ENCODE measurements at regions of chr9 and their contacts with region 1.

Region 1: DNA sequence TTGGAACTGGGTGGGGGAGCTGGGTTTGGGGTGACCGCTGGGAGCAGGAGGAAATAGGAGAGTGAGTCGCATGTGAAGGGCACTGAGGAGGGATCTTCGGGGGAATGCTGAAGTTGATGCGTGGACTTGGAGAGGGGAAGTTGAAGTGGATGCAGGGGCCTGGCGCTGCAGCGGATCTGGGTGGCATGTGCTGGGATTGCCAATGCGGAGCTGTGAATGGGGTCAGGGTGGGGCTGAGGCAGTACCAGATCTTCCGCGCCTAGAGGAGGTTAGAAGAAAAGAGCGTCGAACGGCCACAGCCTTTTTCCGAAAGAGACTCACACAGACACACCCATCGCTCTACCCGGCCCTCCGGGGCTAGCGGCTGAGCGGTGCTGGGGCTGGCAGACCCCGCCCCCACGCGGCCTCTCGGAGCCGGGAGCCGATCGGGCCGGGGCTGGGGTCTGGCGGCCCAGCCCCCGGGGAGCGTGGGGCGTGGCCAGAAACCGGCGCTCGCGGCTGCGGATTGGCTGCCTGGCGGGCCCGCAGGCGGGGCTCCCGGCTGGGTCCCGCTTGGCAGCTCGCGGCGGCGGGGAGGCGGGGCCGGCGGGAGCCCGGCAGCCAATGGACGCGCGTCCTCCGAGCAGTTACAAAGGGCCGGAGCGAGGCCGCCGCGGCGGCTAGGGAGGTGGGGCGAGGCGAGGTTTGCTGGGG is at the start of gene TGFBR1:
- DNase-seq: peak; percentile 81 to 96 (median 89)
- ATAC-seq: peak; percentile 81
- H3K4me3 ChIP-seq: peak within 1 kb of the TSS; percentile 68 to 85
- H3K4me3 Mint-ChIP-seq: peak within 1 kb of the TSS; percentile 90
- H3K27ac ChIP-seq: peak within 1 kb of the TSS; percentile 57 to 70
- H3K27ac Mint-ChIP-seq: peak within 1 kb of the TSS; percentile 91
- H3K4me1 ChIP-seq: peaks cover 48% of the 10 kb centered on the region
- H3K4me1 Mint-ChIP-seq: peaks cover 64% of the 10 kb centered on the region
- H3K27me3 ChIP-seq: no peaks in the 10 kb centered on the region
- H3K27me3 Mint-ChIP-seq: no peaks in the 10 kb centered on the region
- CTCF ChIP-seq: no peak
- total RNA-seq, gene TGFBR1: 24.2 to 25.8 TPM

Region 2: DNA sequence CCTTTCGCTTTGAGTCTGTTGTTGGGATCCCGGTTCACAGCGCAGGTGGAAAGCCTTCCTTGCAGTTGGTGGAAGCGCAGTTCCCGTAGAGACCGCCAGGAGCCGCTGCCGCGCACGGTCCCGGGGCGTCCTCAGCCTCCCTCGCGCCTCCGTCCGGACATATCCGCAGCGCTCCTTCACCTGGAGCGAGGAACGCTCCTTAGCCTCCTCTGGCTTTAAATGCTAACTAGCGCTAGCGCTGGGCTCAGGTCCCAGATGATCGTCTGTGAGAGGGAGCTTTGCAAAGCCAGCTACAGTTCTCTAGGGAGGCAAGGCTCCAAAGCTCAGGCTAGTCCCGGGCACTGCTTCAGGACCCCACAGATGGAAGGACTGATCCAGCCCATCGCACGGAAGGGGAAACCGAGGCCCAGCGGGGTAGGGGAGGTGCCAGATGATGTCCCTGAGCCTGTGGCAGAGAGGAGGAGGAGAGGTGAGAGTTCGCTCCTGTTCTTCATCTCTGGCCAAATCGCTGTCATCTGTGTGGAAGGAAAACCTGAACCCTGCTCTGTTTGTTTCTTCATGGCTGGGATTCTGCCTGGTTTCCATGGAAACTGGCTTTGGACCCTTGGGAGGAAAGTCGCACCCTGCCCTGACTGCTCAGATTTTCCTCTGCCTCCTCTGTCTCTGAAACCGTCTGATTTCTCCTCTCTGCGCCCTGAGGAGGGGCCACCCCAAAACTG is 129.5 kb before region 1 on chr9:
- CTCF ChIA-PET with region 1: interaction called, 12 read pairs
- POLR2A ChIA-PET with region 1: no interaction called
- intact Hi-C with region 1: no loop called
- DNase-seq: peak; percentile 66 to 88 (median 81)
- ATAC-seq: peak; percentile 99
- H3K4me3 ChIP-seq: peak overlapping the region; percentile 33
- H3K4me3 Mint-ChIP-seq: peak overlapping the region; percentile 67
- H3K27ac ChIP-seq: no peak overlapping the region
- H3K27ac Mint-ChIP-seq: no peak overlapping the region
- H3K4me1 ChIP-seq: peaks cover 18% of the 10 kb centered on the region
- H3K4me1 Mint-ChIP-seq: peaks cover 6% of the 10 kb centered on the region
- H3K27me3 ChIP-seq: peaks cover 0 to 7% of the 10 kb centered on the region in 2 experiments
- H3K27me3 Mint-ChIP-seq: peaks cover 7% of the 10 kb centered on the region
- CTCF ChIP-seq: peak; percentile 97

Region 3: DNA sequence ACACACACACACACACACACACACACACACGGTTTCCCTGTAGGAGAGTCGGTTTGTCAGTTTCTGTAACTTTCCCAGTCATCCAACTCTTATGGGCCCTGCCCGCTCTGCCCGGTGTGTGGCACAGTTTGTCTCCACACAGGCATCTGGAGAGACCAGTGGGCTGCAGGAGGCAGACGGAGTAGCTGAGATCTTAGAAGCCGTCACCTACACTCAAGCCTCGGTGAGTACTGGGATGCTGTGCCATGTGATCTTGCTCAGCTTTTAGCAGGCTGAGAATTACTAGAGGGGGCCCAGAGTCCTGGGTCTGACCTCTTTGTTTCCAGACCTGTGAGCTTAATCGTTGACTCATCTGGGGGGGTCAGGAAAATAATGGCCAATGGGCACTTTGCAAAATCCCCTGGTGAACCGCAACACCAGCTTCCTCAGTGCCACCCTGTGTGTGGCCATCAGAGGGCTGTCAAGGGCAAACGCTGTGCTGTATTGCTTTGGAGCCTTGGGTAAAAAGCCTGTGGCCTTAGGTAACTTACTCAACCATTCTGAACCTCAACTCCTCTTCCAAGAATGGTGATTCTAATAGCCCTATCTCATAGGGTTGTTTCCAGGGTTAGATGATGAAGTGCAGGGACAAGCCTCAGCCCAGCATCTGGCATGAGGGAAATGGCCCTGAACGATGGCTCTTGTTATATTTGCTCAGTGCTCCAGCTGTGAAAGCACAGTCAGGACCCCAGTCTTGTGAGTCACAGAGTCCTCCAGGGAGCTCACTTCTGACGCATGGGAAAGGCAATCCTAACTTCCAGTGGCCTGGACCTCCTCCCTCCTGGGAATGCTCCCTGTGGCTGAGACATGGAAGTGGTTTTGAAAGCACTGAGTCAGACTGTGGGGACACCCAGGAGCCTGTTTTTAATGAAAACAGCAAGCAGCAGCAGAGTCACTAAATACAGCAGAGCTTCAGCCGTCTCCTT is 115.3 kb before region 1 on chr9:
- CTCF ChIA-PET with region 1: no interaction called
- POLR2A ChIA-PET with region 1: no interaction called
- intact Hi-C with region 1: no loop called
- DNase-seq: no peak
- ATAC-seq: no peak
- H3K4me3 ChIP-seq: no peak overlapping the region
- H3K4me3 Mint-ChIP-seq: no peak overlapping the region
- H3K27ac ChIP-seq: no peak overlapping the region
- H3K27ac Mint-ChIP-seq: no peak overlapping the region
- H3K4me1 ChIP-seq: no peaks in the 10 kb centered on the region
- H3K4me1 Mint-ChIP-seq: no peaks in the 10 kb centered on the region
- H3K27me3 ChIP-seq: no peaks in the 10 kb centered on the region
- H3K27me3 Mint-ChIP-seq: no peaks in the 10 kb centered on the region
- CTCF ChIP-seq: no peak

Region 4: DNA sequence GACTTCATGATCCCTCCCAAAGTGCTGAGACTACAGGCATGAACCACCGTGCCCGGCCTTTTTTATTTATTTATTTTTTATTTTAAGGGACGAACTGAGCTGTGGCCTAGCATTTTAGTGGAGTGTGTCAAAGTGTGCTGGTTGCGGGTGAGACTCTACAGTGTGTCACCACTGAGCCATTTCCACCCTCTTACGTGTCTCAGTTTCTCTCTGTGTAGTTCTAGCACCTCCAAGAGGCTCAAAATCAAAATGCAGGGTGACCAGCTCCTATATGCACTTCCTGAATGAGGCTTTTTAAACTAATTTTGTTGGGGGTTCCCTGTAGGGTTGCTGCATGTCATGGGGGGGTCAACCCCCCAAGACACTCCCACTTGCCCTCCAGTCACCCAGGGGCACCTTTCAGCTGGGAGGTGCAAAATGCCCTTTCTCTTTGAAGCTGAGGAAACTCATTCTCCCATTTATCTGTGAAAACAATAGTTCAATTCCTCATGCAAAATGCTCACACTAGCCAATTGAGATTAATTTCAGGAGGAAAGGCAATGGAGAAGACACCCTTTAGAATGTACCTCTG is 91.6 kb before region 1 on chr9:
- CTCF ChIA-PET with region 1: interaction called, 11 read pairs
- POLR2A ChIA-PET with region 1: interaction called, 8 read pairs
- intact Hi-C with region 1: no loop called
- DNase-seq: peak in 4 of 9 experiments; percentile 25 to 68 (median 52)
- ATAC-seq: peak; percentile 73
- H3K4me3 ChIP-seq: peak overlapping the region in 1 of 2 experiments; percentile 24
- H3K4me3 Mint-ChIP-seq: peak overlapping the region; percentile 74
- H3K27ac ChIP-seq: peak overlapping the region; percentile 35 to 81
- H3K27ac Mint-ChIP-seq: peak overlapping the region; percentile 95
- H3K4me1 ChIP-seq: peaks cover 20% of the 10 kb centered on the region
- H3K4me1 Mint-ChIP-seq: peaks cover 32% of the 10 kb centered on the region
- H3K27me3 ChIP-seq: no peaks in the 10 kb centered on the region
- H3K27me3 Mint-ChIP-seq: no peaks in the 10 kb centered on the region
- CTCF ChIP-seq: peak; percentile 42

Region 5: GRCh38 chr9:99076483-99077171 is 28.0 kb before region 1 on chr9:
- CTCF ChIA-PET with region 1: interaction called, 4 read pairs
- POLR2A ChIA-PET with region 1: interaction called, 11 read pairs
- intact Hi-C with region 1: loop called in 1 of 2 experiments (anchors 2 kb)
- DNase-seq: peak in 8 of 9 experiments; percentile 46 to 85 (median 64)
- ATAC-seq: peak; percentile 98
- H3K4me3 ChIP-seq: no peak overlapping the region
- H3K4me3 Mint-ChIP-seq: peak overlapping the region; percentile 33
- H3K27ac ChIP-seq: peak overlapping the region in 1 of 2 experiments; percentile 47
- H3K27ac Mint-ChIP-seq: peak overlapping the region; percentile 84
- H3K4me1 ChIP-seq: peaks cover 23% of the 10 kb centered on the region
- H3K4me1 Mint-ChIP-seq: peaks cover 54% of the 10 kb centered on the region
- H3K27me3 ChIP-seq: no peaks in the 10 kb centered on the region
- H3K27me3 Mint-ChIP-seq: no peaks in the 10 kb centered on the region
- CTCF ChIP-seq: no peak

Region 6: GRCh38 chr9:99130069-99130468 is 25.5 kb after region 1 on chr9:
- CTCF ChIA-PET with region 1: interaction called, 6 read pairs
- POLR2A ChIA-PET with region 1: interaction called, 47 read pairs
- intact Hi-C with region 1: loop called in 1 of 2 experiments (anchors 5 kb)
- DNase-seq: no peak
- ATAC-seq: no peak
- H3K4me3 ChIP-seq: no peak overlapping the region
- H3K4me3 Mint-ChIP-seq: peak overlapping the region; percentile 38
- H3K27ac ChIP-seq: peak overlapping the region in 1 of 2 experiments; percentile 38
- H3K27ac Mint-ChIP-seq: peak overlapping the region; percentile 85
- H3K4me1 ChIP-seq: peaks cover 88% of the 10 kb centered on the region
- H3K4me1 Mint-ChIP-seq: peaks cover 86% of the 10 kb centered on the region
- H3K27me3 ChIP-seq: no peaks in the 10 kb centered on the region
- H3K27me3 Mint-ChIP-seq: no peaks in the 10 kb centered on the region
- CTCF ChIP-seq: no peak

Region 7: DNA sequence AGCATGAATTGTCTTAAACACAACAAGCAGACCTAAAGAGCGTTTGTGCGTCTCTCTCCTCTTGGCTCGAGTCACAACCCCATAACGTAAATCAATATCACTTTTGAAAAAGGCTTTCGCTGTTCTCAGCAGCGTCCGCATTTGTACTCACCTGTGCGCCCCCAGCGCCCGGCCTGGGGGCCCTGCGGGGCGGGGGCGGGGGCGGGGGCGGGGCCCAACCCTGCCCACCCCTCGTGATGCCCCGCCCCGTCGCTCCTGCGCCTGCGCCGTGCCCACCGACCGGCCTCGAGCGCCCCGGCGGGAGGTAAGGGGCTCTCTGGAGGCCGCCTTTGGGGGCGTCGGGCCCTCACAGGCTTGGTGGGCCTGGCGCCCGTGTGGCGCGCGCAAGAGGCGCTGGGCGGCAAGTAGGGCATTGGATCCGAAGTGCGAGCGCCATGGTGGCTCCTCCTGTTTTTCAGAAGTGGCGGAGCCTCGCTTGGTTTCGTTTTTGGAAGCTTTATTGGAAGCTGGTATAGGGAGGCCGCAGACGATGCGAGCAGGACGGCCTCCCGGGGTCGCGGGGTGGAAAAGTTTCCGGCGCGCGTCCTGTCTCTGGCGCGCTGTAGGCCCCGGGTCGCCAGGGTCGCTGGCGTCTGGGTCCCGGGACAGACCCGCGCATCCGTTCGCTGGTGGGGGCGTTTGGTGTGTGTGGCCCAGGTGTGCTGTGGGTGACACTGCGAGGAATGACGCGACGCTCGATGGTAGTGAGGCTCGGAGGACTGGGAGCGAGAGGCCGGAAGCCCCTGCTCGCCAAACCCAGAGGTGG is 802.0 kb after region 1 on chr9 and contains the start of gene STX17:
- CTCF ChIA-PET with region 1: no interaction called
- POLR2A ChIA-PET with region 1: no interaction called
- intact Hi-C with region 1: loop called in 1 of 2 experiments (anchors 10 kb)
- DNase-seq: peak; percentile 64 to 92 (median 84)
- ATAC-seq: peak; percentile 85
- H3K4me3 ChIP-seq: peak within 1 kb of the TSS; percentile 95 to 96
- H3K4me3 Mint-ChIP-seq: peak within 1 kb of the TSS; percentile 97
- H3K27ac ChIP-seq: peak within 1 kb of the TSS; percentile 98 to 99
- H3K27ac Mint-ChIP-seq: peak within 1 kb of the TSS; percentile 100
- H3K4me1 ChIP-seq: peaks cover 20% of the 10 kb centered on the region
- H3K4me1 Mint-ChIP-seq: peaks cover 33% of the 10 kb centered on the region
- H3K27me3 ChIP-seq: no peaks in the 10 kb centered on the region
- H3K27me3 Mint-ChIP-seq: no peaks in the 10 kb centered on the region
- CTCF ChIP-seq: no peak
- total RNA-seq, gene STX17: 21.0 to 23.1 TPM